ENCODE measurements at regions of chr4 and their contacts with region 1.

Region 1: DNA sequence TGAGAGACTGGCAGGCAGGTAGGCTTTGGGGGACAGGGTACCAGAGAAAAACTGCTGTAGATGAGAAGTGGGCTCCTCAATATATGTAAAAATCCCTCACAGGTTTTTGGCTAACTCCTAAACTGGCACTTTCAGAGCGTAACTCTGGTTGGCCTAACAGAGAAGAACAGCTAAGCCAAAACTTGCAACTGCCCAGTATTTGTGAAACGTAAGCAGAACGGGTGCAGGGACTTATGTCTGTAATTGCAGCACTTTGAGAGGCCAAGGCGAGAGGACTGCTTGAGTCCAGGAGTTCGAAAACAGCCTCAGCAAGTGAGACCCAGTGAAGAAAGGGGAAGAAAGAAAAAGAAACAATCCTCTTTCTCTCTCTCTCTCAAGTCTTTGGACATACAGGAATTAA is 25.0 kb downstream of the EIF4E start:
- DNase-seq: no peak

Region 2: DNA sequence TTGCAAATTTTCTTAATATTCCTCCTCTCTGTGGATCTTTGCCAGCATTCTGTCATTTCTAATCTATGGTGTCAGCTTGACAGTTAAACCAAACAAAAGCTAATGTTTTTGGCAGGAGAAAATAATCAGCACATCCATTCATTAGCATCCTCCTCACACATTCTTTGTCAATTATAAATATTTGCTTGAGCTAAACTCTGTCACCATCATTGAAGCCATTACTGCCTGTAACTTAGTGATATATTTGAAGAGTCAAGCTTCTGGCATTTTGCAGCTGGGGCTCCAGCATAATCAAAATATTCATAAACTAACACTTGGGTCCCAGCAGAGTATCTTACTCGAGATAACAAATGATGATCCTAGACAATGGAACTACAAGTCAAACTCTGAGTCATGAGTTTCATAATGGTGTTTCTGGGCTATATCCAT is 101.2 kb before region 1 on chr4:
- in situ Hi-C with region 1: no loop called
- DNase-seq: no peak

Region 3: DNA sequence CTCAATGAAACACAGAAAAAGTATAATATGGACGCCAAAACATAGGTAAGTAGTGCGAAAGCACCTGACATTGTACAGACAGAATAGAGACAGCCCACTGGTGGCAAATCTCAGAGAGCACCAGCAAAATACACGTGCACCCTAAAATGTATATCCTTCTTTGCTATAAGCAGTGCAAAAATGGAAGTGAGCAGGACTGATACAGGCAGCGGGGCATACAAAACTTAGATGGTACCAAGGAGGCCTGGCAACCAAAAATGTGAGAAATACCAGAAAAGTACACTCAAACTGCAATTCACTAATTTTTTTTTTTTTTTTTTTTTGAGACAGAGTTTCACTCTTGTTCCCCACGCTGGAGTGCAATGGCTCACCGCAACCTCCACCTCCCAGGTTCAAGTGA is 38.9 kb before region 1 on chr4:
- in situ Hi-C with region 1: loop called (anchors 5 kb)
- DNase-seq: no peak